ENCODE measurements at regions of chr19 and their contacts with region 1.

Region 1: DNA sequence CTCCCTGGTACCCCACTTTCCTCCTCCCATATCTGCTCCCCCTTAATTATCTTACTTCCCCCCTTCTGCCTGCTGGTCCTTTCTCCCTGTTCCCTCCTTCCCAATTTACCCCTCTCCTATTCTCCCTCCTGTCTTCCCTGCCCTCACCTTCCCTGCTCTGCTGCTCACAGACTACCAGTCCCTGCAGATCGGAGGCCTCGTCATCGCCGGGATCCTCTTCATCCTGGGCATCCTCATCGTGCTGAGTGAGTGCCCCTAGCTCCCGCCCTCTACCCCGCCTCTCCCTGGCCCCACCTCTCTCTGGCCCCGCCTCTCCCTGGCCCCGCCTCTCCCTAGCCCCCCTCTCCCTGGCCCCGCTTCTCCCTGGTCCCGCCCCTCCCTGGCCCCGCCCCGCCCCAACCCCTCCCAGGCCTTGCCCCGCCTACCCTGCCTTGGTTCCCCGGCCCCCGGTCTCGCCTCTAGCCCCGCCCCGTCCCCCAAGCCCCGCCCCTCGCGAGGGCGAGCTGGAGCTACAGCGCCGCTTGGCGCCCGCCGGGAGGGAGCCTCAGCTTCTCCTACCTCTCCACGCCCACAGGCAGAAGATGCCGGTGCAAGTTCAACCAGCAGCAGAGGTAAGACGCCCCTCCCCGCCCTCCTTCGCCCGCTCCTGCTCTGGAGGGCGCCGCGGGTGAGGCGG is 2.0 kb upstream of the FXYD7 start:
- DNase-seq: peak; percentile 87
- ATAC-seq: peak; percentile 86
- H3K4me3 Mint-ChIP-seq: peak overlapping the region; percentile 87
- H3K27ac Mint-ChIP-seq: peak overlapping the region; percentile 77
- H3K4me1 Mint-ChIP-seq: peaks cover 40% of the 10 kb centered on the region
- H3K27me3 Mint-ChIP-seq: no peaks in the 10 kb centered on the region
- CTCF ChIP-seq: no peak

Region 2: GRCh38 chr19:34994643-34995541 is 146.2 kb before region 1 on chr19:
- CTCF ChIA-PET with region 1: no interaction called
- POLR2A ChIA-PET with region 1: no interaction called
- intact Hi-C with region 1: no loop called
- DNase-seq: no peak
- ATAC-seq: no peak
- H3K4me3 Mint-ChIP-seq: no peak overlapping the region
- H3K27ac Mint-ChIP-seq: no peak overlapping the region
- H3K4me1 Mint-ChIP-seq: peaks cover 34% of the 10 kb centered on the region
- H3K27me3 Mint-ChIP-seq: no peaks in the 10 kb centered on the region
- CTCF ChIP-seq: no peak

Region 3: DNA sequence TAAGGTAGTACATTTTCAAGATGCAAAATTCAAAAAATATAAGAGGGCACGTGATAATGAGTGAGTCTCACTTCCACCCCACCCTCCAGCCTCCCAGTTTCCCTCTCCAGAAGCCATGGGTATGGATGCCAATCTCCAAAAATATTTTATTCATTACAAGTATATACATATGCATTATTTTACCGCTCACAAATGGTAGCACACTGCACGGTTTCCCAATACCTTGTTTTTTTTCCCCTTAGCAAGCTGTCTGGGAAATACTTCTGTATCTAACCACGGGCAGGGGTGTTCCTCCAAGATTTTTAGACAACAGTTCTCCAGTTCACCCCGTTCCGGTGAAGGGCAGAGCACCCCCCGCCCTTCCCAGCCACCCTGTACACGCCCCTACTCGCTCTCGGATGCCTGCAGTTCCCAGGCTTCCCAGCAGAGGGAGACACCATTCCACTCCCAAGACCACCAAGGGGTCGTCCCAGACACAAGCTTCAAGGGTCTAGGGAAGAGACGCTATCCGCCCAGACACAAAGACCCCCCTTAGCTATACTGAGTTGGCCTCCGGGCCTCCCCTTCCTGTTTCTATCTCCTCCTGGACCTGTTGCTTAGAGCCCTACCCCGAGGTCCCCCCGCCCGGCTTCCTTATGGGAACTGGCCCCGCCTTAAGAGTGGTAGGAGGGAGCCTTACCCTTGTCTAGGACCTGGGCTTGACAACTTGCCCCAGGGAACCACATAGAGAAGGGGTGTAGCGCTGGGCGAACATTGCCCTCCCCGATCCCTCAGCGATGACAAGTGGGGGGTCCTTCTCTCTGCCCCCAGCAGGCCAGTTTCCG is 26.5 kb before region 1 on chr19:
- CTCF ChIA-PET with region 1: interaction called, 6 read pairs
- POLR2A ChIA-PET with region 1: no interaction called
- intact Hi-C with region 1: loop called (anchors 1 kb)
- DNase-seq: peak; percentile 75
- ATAC-seq: peak; percentile 89
- H3K4me3 Mint-ChIP-seq: no peak overlapping the region
- H3K27ac Mint-ChIP-seq: no peak overlapping the region
- H3K4me1 Mint-ChIP-seq: peaks cover 4% of the 10 kb centered on the region
- H3K27me3 Mint-ChIP-seq: peaks cover 7% of the 10 kb centered on the region
- CTCF ChIP-seq: peak; percentile 49

Region 4: DNA sequence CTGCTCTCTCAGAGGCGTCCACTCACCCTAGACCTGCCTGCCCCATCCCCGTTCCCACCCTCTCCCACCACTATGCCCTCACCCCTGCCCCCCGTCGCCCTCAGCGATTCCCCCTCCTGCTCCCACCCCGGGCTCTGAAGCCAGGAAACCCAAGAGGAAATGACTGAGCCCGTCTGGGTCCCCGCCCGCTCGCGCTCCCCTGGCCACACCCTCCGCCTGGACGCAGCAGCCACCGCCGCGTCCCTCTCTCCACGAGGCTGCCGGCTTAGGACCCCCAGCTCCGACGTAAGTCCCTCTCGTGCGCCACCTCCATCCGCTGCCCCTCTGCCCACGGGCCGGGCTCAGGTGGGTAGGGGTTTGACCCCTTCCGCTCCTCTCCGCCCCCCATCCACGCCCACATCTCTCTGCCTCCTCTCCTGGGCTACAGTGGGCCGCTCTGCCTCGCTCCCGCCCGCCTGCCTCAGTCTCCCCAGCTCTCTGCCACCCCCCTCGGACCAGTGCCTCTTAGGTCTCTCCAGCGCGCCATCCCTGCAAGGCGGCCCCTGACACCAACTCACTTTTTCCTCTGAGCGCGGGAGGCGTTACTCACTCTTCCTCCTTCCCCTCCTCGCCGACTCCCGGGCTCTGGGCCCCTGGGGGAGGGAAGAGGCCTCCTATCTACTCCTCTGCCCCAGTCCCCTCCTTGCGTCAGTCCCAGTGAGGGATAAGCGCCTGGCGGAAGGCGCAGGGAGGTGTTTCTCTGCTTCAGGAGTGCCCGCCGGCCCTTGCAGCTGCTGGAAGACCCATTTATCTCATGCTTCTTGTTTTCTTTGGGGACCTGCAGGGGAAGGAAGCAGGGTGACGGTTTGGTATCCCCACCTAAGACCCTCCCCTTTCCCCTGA is 13.7 kb after region 1 on chr19 and contains the start of gene FXYD5:
- CTCF ChIA-PET with region 1: interaction called, 19 read pairs
- POLR2A ChIA-PET with region 1: interaction called, 36 read pairs
- intact Hi-C with region 1: loop called (anchors 1 kb)
- DNase-seq: peak; percentile 55
- ATAC-seq: peak; percentile 77
- H3K4me3 Mint-ChIP-seq: peak within 1 kb of the TSS; percentile 99
- H3K27ac Mint-ChIP-seq: peak within 1 kb of the TSS; percentile 94
- H3K4me1 Mint-ChIP-seq: peaks cover 49% of the 10 kb centered on the region
- H3K27me3 Mint-ChIP-seq: no peaks in the 10 kb centered on the region
- CTCF ChIP-seq: no peak
- total RNA-seq, gene FXYD5: 103 and 125 TPM in 2 replicates

Region 5: GRCh38 chr19:35330475-35330874 is 189.4 kb after region 1 on chr19:
- CTCF ChIA-PET with region 1: no interaction called
- POLR2A ChIA-PET with region 1: interaction called, 3 read pairs
- intact Hi-C with region 1: loop called (anchors 5 kb)
- DNase-seq: peak; percentile 76
- ATAC-seq: peak; percentile 81
- H3K4me3 Mint-ChIP-seq: peak overlapping the region; percentile 90
- H3K27ac Mint-ChIP-seq: peak overlapping the region; percentile 94
- H3K4me1 Mint-ChIP-seq: peaks cover 85% of the 10 kb centered on the region
- H3K27me3 Mint-ChIP-seq: no peaks in the 10 kb centered on the region
- CTCF ChIP-seq: no peak